ENCODE measurements at regions of chr10 and their contacts with region 1.

Region 1: GRCh38 chr10:3785257-3785850 is 345 bp upstream of the KLF6 start:
- DNase-seq: peak; percentile 99 to 100 (median 99)
- H3K4me3 ChIP-seq: peak overlapping the region; percentile 79
- H3K4me3 Mint-ChIP-seq: peak overlapping the region; percentile 91 to 99 (median 97)
- H3K27ac ChIP-seq: peak overlapping the region; percentile 100
- H3K27ac Mint-ChIP-seq: peak overlapping the region; percentile 93 to 100 (median 99)
- H3K4me1 ChIP-seq: peaks cover 27% of the 10 kb centered on the region
- H3K4me1 Mint-ChIP-seq: peaks cover 27 to 55% (median 36%) of the 10 kb centered on the region in 3 donors
- H3K27me3 ChIP-seq: no peaks in the 10 kb centered on the region
- H3K27me3 Mint-ChIP-seq: peaks cover 0 to 29% of the 10 kb centered on the region in 2 donors

Region 2: GRCh38 chr10:3803295-3803926 is 18.1 kb after region 1 on chr10:
- CTCF ChIA-PET with region 1: interaction called, 120 read pairs
- POLR2A ChIA-PET with region 1: interaction called, 505 read pairs
- DNase-seq: no peak
- H3K4me3 ChIP-seq: no peak overlapping the region
- H3K4me3 Mint-ChIP-seq: peak overlapping the region in 5 of 7 donors; percentile 51 to 79 (median 54)
- H3K27ac ChIP-seq: peak overlapping the region; percentile 98
- H3K27ac Mint-ChIP-seq: peak overlapping the region in 1 of 8 donors; percentile 99
- H3K4me1 ChIP-seq: peaks cover 76% of the 10 kb centered on the region
- H3K4me1 Mint-ChIP-seq: peaks cover 19 to 30% (median 29%) of the 10 kb centered on the region in 3 donors
- H3K27me3 ChIP-seq: no peaks in the 10 kb centered on the region
- H3K27me3 Mint-ChIP-seq: no peaks in the 10 kb centered on the region

Region 3: DNA sequence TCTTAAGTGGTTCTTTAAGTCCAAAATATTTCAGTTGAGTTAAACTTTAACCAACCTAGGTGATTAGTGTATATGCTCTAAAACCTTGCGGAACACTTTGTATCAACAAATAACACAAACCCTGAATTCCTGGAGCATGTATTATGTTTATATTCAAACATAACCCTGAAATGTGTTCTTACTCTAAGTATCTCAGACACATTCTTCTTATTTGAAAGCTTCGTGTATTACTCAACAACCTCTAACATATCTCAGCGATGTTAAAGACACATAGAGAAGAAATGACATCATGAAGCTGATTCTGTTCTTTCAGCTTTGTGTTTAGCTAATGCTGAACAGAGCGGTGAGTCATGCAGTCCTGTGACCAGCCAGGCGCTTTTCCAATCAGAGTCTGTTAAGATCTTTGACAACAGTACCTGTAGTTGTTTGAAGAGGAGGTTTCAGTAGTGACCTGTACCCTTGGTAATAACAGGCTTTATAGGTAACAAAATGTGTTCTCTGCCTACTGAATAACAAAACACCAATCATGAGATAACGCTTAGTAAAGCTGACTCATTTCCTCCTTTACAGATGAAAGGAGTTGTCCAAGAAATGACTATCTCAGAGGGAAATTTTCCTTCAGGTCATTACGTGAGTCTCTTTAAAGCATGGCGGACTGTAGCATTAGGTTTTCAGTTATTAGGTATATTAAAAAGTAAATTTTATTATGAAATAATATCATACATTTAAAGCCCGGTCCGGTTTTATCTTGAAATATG is 67.0 kb after region 1 on chr10:
- CTCF ChIA-PET with region 1: interaction called, 6 read pairs
- POLR2A ChIA-PET with region 1: interaction called, 41 read pairs
- DNase-seq: peak in 4 of 5 donors; percentile 46 to 88 (median 55)
- H3K4me3 ChIP-seq: no peak overlapping the region
- H3K4me3 Mint-ChIP-seq: peak overlapping the region in 5 of 7 donors; percentile 6 to 64 (median 37)
- H3K27ac ChIP-seq: peak overlapping the region; percentile 62
- H3K27ac Mint-ChIP-seq: peak overlapping the region; percentile 70 to 95 (median 88)
- H3K4me1 ChIP-seq: peaks cover 12% of the 10 kb centered on the region
- H3K4me1 Mint-ChIP-seq: peaks cover 21 to 32% (median 30%) of the 10 kb centered on the region in 3 donors
- H3K27me3 ChIP-seq: no peaks in the 10 kb centered on the region
- H3K27me3 Mint-ChIP-seq: no peaks in the 10 kb centered on the region

Region 4: GRCh38 chr10:3902054-3902808 is 116.9 kb after region 1 on chr10:
- CTCF ChIA-PET with region 1: interaction called, 4 read pairs
- POLR2A ChIA-PET with region 1: interaction called, 17 read pairs
- DNase-seq: peak in 4 of 5 donors; percentile 19 to 74 (median 32)
- H3K4me3 ChIP-seq: no peak overlapping the region
- H3K4me3 Mint-ChIP-seq: peak overlapping the region in 4 of 7 donors; percentile 7 to 50 (median 30)
- H3K27ac ChIP-seq: no peak overlapping the region
- H3K27ac Mint-ChIP-seq: peak overlapping the region; percentile 23 to 91 (median 74)
- H3K4me1 ChIP-seq: peaks cover 12% of the 10 kb centered on the region
- H3K4me1 Mint-ChIP-seq: peaks cover 17 to 25% (median 24%) of the 10 kb centered on the region in 3 donors
- H3K27me3 ChIP-seq: no peaks in the 10 kb centered on the region
- H3K27me3 Mint-ChIP-seq: no peaks in the 10 kb centered on the region

Region 5: GRCh38 chr10:3948843-3949242 is 163.5 kb after region 1 on chr10:
- CTCF ChIA-PET with region 1: interaction called, 14 read pairs
- POLR2A ChIA-PET with region 1: interaction called, 57 read pairs
- DNase-seq: peak; percentile 57 to 94 (median 69)
- H3K4me3 ChIP-seq: no peak overlapping the region
- H3K4me3 Mint-ChIP-seq: peak overlapping the region; percentile 59 to 89 (median 72)
- H3K27ac ChIP-seq: peak overlapping the region; percentile 36
- H3K27ac Mint-ChIP-seq: peak overlapping the region; percentile 90 to 98 (median 97)
- H3K4me1 ChIP-seq: peaks cover 56% of the 10 kb centered on the region
- H3K4me1 Mint-ChIP-seq: peaks cover 67 to 90% (median 85%) of the 10 kb centered on the region in 3 donors
- H3K27me3 ChIP-seq: no peaks in the 10 kb centered on the region
- H3K27me3 Mint-ChIP-seq: no peaks in the 10 kb centered on the region

Measured in CD8-positive, alpha-beta memory T cell (primary cell).